ENCODE measurements at regions of chr1 and their contacts with region 1.

Region 1: DNA sequence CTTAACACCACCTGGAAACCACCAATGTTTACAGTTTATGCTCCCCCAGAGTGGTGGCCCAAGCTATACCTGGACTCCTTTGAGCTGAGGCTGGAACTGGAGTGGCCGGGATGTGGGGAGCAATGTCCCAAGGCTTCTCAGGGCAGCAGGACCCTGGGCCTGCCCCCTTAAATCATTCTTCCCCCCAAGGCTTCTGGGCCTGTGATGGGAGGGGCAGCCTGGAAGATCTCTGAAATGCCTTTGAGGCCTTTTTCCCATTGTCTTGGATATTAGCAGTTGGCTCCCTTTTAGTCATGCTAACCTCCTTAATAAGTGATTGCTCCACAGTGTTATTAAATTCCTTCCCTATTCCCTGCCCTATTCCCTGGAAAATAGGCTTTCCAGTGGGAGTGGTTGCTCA is 185.8 kb downstream of the HS2ST1 start:
- DNase-seq: no peak
- H3K4me3 Mint-ChIP-seq: no peak overlapping the region
- H3K27ac Mint-ChIP-seq: no peak overlapping the region
- H3K4me1 Mint-ChIP-seq: no peaks in the 10 kb centered on the region
- H3K27me3 Mint-ChIP-seq: no peaks in the 10 kb centered on the region

Region 2: DNA sequence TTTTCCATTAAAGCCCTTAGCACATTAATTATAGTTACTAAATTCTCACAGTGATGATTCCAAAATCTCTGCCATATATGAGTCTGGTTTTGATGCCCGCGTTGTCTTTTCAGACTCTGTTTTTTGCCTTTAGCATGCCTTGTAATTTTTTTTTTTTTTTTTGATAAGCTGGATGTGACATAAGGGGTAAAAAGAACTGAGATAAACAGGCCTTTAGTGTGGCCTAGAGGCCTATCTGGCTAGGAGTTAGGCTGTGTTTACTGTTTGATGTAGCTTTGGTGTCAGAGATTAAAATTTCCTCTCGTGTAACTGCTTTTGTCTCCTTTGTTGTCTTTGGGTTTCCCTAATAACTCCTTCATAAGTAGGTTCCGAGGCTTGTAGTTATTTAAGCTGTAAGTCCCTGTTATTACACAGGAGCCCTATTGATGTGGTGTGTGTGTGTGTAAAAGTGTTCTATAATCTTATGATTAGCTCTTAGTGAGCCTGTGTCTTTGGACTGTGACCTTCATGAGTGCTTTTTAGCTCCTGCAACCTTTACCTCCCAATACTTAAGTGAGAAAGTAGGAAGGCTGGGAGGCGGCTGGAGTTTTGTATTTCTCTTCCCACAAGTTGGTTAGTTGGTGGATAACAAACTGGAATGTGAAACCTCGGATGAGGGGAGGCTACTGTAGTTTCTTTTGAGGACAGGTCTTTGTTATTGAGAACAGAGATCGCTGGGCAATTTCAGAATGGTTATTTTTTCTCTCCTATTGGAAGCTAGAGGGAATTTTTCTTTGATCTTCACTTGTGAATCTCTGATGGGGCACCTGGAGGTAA is 166.5 kb before region 1 on chr1:
- intact Hi-C with region 1: no loop called
- DNase-seq: no peak
- H3K4me3 Mint-ChIP-seq: no peak overlapping the region
- H3K27ac Mint-ChIP-seq: no peak overlapping the region
- H3K4me1 Mint-ChIP-seq: peaks cover 9% of the 10 kb centered on the region
- H3K27me3 Mint-ChIP-seq: peaks cover 3% of the 10 kb centered on the region

Region 3: GRCh38 chr1:87058343-87058649 is 42.0 kb before region 1 on chr1:
- intact Hi-C with region 1: loop called (anchors 1 kb)
- DNase-seq: no peak
- H3K4me3 Mint-ChIP-seq: no peak overlapping the region
- H3K27ac Mint-ChIP-seq: no peak overlapping the region
- H3K4me1 Mint-ChIP-seq: peaks cover 16% of the 10 kb centered on the region
- H3K27me3 Mint-ChIP-seq: no peaks in the 10 kb centered on the region

Region 4: DNA sequence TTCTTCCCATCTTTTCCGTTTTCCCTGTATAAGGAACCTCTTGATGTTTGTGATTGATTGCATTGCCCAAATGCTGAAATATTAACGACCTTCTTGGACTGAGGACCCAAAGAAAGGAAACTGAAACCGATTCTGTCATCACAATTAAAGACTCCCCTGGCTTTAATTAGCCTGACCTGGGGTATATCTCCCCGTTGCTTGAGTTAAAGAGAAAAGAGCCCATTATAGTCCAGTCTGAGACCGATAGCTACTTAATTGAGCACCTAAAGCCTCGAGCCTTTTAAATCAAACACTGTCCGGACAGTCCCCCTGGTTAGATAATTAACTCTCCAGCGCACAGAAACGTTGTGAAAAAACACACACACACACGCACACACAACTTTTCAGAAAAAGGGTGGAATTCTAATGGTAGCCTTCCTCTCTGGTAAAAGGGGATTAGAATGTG is 236.4 kb after region 1 on chr1:
- intact Hi-C with region 1: no loop called
- DNase-seq: no peak
- H3K4me3 Mint-ChIP-seq: peak overlapping the region; percentile 85
- H3K27ac Mint-ChIP-seq: no peak overlapping the region
- H3K4me1 Mint-ChIP-seq: peaks cover 58% of the 10 kb centered on the region
- H3K27me3 Mint-ChIP-seq: no peaks in the 10 kb centered on the region